Activated CD8-positive, alpha-beta T cell treated with anti-CD3 and anti-CD28 coated beads for 36 hours (primary cell): ENCODE measurements at regions of chr5 and their contacts with region 1.

Region 1: DNA sequence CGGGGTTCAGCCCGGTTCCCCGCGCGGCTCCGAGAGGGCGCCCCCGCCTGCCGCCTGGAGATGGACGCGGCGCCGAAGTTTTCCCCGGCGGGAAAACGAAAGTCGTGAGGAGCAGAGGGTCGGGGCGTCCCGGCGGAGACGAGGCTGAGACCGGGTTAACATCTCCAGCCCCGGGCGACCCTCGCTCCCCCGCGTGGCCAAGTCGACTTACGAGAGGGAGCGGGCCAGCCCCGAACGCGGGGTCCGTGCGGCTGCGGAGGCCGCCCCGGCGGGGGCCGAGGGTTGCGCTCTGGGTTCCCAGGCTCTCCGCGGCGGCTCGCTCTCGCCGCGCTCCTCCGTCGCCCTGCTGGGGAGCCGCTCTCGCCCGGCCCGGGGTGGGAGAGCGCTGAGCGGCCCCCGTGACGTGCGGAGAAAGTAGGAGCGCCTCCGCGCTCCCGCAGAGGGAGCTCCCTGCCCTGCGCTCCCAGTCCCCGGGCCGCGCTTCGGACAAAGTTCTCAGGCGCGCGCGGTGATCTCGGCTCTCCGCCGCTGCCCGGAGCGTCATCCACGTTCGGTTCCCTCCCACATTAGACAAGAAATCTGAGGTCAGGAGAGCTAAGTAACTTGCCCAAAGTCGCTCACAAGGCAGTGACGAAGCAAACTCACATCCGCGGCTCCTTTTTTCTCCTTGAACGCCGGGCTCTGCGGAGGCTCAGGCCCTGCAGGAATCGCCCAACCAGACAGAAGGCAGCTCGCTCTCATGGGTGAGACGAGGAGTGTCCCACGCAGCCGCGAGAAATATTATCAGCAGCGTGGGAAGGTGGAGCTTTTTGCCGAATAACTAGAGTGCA is 1.2 kb upstream of the GCNT4 start:
- DNase-seq: peak; percentile 69
- ATAC-seq: peak; percentile 24
- H3K4me3 Mint-ChIP-seq: peak overlapping the region; percentile 81
- H3K27ac Mint-ChIP-seq: peak overlapping the region; percentile 89
- H3K4me1 Mint-ChIP-seq: peaks cover 75% of the 10 kb centered on the region
- H3K27me3 Mint-ChIP-seq: no peaks in the 10 kb centered on the region
- CTCF ChIP-seq: no peak

Region 2: DNA sequence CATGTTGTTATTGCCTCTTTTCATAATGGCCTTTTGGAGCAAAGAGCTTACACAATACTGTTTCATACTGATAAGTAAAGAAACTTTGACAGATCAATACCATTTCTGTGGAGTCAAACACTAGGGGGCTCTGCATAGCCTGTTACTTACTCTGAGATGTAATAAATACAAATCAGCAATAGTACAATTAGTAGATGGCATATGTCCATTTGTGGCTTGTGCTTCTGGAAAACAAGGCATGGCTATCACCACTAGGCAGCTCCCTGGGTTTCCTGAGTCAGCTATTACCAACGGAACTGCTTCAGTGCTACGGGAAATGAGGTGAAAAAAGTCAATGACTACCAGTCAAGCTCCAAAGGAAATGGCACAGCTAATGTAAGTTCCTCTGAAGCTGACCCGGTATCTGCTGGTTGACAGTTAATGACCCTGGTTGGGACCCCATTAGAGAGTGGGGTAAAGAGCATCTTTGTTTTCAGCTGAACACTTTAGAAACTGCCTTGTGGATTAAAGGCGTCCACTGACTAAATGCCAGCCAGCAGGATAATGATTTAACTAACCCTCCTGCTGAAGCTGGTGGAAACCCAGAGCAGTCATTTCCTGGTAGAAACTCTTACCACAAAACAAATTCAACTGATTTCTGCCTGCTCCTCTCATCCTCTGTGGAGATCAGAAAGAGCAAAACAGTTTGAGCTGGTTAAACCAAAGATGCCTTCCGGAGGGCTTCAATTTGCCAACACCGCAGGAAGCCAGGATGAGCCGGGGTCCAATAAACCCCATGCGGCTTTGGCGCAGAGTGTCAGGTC is 118.4 kb before region 1 on chr5:
- CTCF ChIA-PET with region 1: interaction called, 21 read pairs
- POLR2A ChIA-PET with region 1: no interaction called
- intact Hi-C with region 1: loop called (anchors 5 kb)
- DNase-seq: peak; percentile 45
- ATAC-seq: peak; percentile 87
- H3K4me3 Mint-ChIP-seq: peak overlapping the region; percentile 46
- H3K27ac Mint-ChIP-seq: peak overlapping the region; percentile 83
- H3K4me1 Mint-ChIP-seq: peaks cover 27% of the 10 kb centered on the region
- H3K27me3 Mint-ChIP-seq: peaks cover 4% of the 10 kb centered on the region
- CTCF ChIP-seq: peak; percentile 66

Region 3: GRCh38 chr5:75034137-75034750 is 19.3 kb before region 1 on chr5:
- CTCF ChIA-PET with region 1: interaction called, 31 read pairs
- POLR2A ChIA-PET with region 1: interaction called, 9 read pairs
- intact Hi-C with region 1: no loop called
- DNase-seq: peak; percentile 89
- ATAC-seq: peak; percentile 91
- H3K4me3 Mint-ChIP-seq: no peak overlapping the region
- H3K27ac Mint-ChIP-seq: peak overlapping the region; percentile 66
- H3K4me1 Mint-ChIP-seq: peaks cover 57% of the 10 kb centered on the region
- H3K27me3 Mint-ChIP-seq: no peaks in the 10 kb centered on the region
- CTCF ChIP-seq: no peak

Region 4: DNA sequence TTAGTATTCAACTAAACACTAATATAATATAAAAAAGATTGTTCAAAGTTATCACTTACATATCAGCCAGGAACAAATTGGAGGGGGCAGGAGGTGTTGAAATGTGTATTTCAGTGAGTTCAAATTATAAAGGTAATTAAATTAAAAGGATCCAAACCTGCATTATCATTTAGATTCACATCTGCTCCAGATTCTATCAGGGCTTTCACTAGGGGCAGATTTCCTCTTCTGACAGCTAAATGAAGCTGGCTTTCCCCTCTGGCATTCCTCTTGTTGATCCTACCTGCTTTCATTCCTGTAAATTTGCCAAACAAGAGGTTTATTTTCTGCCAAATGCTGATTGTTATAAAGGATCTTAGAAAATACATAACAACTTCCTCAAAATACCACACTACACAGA is 85.2 kb after region 1 on chr5:
- CTCF ChIA-PET with region 1: no interaction called
- POLR2A ChIA-PET with region 1: no interaction called
- intact Hi-C with region 1: no loop called
- DNase-seq: no peak
- ATAC-seq: no peak
- H3K4me3 Mint-ChIP-seq: no peak overlapping the region
- H3K27ac Mint-ChIP-seq: no peak overlapping the region
- H3K4me1 Mint-ChIP-seq: peaks cover 10% of the 10 kb centered on the region
- H3K27me3 Mint-ChIP-seq: no peaks in the 10 kb centered on the region
- CTCF ChIP-seq: no peak

Region 5: GRCh38 chr5:75236322-75237316 is 183.1 kb after region 1 on chr5 and contains the start of gene ANKRD31:
- CTCF ChIA-PET with region 1: interaction called, 47 read pairs
- POLR2A ChIA-PET with region 1: interaction called, 13 read pairs
- intact Hi-C with region 1: loop called (anchors 5 kb)
- DNase-seq: peak; percentile 88
- ATAC-seq: peak; percentile 99
- H3K4me3 Mint-ChIP-seq: peak within 1 kb of the TSS; percentile 96
- H3K27ac Mint-ChIP-seq: peak within 1 kb of the TSS; percentile 99
- H3K4me1 Mint-ChIP-seq: peaks cover 10% of the 10 kb centered on the region
- H3K27me3 Mint-ChIP-seq: no peaks in the 10 kb centered on the region
- CTCF ChIP-seq: peak; percentile 76
- total RNA-seq, gene ANKRD31: 0.94 to 0.99 TPM

Region 6: DNA sequence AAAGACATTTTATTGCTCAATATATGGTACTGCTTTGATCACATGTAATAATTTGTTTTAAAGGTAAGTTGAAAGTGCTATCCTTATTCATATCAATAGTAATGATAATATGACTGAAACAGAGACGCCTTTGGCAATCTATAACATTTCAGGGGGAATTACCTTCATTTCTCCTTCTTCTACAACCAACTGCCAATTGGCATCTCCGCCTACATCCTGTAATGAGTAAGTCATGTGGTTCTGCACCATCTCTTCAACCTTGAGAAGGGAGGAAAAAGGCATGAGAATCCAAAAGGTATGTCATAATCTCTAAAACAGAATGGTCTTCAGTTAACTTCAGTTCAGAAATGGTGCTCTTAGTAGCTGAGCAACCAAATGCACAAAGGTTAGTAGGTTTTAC is 335.9 kb after region 1 on chr5:
- CTCF ChIA-PET with region 1: no interaction called
- POLR2A ChIA-PET with region 1: no interaction called
- intact Hi-C with region 1: no loop called
- DNase-seq: peak; percentile 42
- ATAC-seq: peak; percentile 85
- H3K4me3 Mint-ChIP-seq: no peak overlapping the region
- H3K27ac Mint-ChIP-seq: peak overlapping the region; percentile 50
- H3K4me1 Mint-ChIP-seq: peaks cover 9% of the 10 kb centered on the region
- H3K27me3 Mint-ChIP-seq: no peaks in the 10 kb centered on the region
- CTCF ChIP-seq: no peak